ENCODE measurements at regions of chr2 and their contacts with region 1.

Region 1: GRCh38 chr2:100365434-100365833 is 43.1 kb upstream of the LONRF2 start:
- DNase-seq: peak in 1 of 2 donors; percentile 35
- ATAC-seq: no peak
- H3K4me3 ChIP-seq: no peak overlapping the region
- H3K27ac ChIP-seq: no peak overlapping the region
- H3K4me1 ChIP-seq: peaks cover 0 to 15% (median 0%) of the 10 kb centered on the region in 9 donors
- H3K27me3 ChIP-seq: no peaks in the 10 kb centered on the region
- CTCF ChIP-seq: no peak

Region 2: GRCh38 chr2:99545066-99545465 is 820.4 kb before region 1 on chr2:
- intact Hi-C with region 1: loop called in 1 of 10 experiments (anchors 10 kb)
- DNase-seq: no peak
- ATAC-seq: no peak
- H3K4me3 ChIP-seq: no peak overlapping the region
- H3K27ac ChIP-seq: no peak overlapping the region
- H3K4me1 ChIP-seq: peaks cover 0 to 12% (median 0%) of the 10 kb centered on the region in 9 donors
- H3K27me3 ChIP-seq: no peaks in the 10 kb centered on the region
- CTCF ChIP-seq: no peak

Measured in heart right ventricle (tissue), 16 donors.